ENCODE measurements at regions of chr7 and their contacts with region 1.

Region 1: GRCh38 chr7:74164985-74165456 is 9.1 kb upstream of the EIF4H start:
- DNase-seq: no peak
- ATAC-seq: no peak
- H3K4me3 Mint-ChIP-seq: no peak overlapping the region
- H3K27ac Mint-ChIP-seq: no peak overlapping the region
- H3K4me1 Mint-ChIP-seq: no peaks in the 10 kb centered on the region
- H3K27me3 Mint-ChIP-seq: no peaks in the 10 kb centered on the region

Region 2: DNA sequence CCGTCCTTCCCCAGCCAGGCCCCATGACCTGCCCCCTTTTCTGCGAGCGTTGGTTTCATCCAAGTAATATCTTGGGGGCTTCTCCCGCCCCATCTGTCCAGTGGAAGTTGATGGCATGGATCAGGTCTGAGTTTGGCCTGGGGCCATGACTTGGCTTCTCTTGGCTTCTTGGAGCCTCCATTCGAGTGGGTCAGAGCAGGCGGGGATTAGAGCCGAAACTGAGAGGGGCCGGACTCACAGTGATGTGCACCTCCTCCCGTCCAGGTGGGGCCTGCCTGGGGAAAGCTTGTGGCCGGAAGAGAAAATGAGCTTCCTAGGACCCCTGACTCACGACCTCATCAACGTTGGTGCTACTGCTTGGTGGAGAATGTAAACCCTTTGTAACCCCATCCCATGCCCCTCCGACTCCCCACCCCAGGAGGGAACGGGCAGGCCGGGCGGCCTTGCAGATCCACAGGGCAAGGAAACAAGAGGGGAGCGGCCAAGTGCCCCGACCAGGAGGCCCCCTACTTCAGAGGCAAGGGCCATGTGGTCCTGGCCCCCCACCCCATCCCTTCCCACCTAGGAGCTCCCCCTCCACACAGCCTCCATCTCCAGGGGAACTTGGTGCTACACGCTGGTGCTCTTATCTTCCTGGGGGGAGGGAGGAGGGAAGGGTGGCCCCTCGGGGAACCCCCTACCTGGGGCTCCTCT is 96.5 kb before region 1 on chr7:
- CTCF ChIA-PET with region 1: interaction called, 3 read pairs
- POLR2A ChIA-PET with region 1: interaction called, 15 read pairs
- intact Hi-C with region 1: no loop called
- DNase-seq: no peak
- ATAC-seq: no peak
- H3K4me3 Mint-ChIP-seq: no peak overlapping the region
- H3K27ac Mint-ChIP-seq: no peak overlapping the region
- H3K4me1 Mint-ChIP-seq: no peaks in the 10 kb centered on the region
- H3K27me3 Mint-ChIP-seq: no peaks in the 10 kb centered on the region

Region 3: DNA sequence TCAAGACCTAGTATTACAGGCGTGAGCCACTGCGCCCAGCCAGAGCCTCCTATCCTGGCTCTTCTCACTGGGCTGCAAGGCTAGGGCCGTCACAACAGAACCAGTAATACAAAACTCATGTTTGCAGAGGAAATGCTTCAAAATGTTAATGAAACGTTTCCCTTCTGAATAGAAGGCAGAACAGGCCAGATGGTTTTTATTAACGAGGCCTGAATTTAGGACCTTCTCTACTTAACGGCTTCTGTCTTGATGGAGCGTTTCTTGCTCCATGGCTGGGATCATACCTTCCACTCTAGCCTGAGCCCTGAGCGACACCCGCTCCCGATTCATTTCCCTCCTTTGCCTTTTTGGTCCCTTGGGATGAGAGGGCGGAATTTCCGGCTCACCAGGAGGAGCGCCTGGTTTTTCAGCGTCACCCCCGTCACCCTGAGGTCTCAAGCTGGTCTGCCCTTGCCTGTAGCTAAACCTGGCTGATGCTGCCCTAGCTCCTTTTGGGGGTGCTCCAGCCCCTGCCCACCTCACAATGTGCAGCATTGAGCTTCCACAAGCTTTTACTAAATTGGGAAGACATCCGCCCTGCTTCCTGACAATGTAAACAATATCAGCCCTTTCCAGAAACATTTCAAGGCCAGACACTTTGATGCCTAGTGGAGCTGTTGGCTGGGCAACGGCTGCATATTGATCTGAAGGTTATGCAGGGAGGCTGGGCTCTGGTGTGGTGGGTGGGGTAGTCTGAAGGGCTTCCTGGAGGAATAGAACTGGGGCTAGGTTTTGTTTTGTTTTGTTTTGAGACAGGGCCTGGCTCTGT is 129.4 kb after region 1 on chr7:
- CTCF ChIA-PET with region 1: no interaction called
- POLR2A ChIA-PET with region 1: no interaction called
- intact Hi-C with region 1: no loop called
- DNase-seq: no peak
- ATAC-seq: no peak
- H3K4me3 Mint-ChIP-seq: no peak overlapping the region
- H3K27ac Mint-ChIP-seq: no peak overlapping the region
- H3K4me1 Mint-ChIP-seq: peaks cover 3% of the 10 kb centered on the region
- H3K27me3 Mint-ChIP-seq: peaks cover 5% of the 10 kb centered on the region